Right ventricle myocardium inferior (tissue), 1 donor: ENCODE measurements at regions of chr11 and their contacts with region 1.

Region 1: DNA sequence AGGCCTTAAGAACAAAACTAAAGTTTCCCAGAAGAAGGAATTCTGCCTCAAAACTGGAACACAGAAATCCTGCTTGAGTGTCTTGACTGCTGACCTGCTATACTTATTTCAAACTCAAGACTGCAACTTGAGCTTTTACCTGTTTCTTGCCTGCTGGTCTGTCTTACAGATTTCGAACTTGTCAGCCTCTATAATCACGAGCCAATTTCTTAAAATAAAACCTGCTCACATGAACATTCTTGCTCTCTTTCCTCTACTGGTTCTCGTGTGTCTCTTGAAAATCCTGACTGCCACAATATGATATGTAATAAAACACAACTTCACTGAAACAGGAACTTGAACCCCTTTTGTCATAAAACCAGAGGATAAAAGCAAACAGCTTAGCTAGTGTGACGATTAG is 13.9 kb downstream of the PATL1 start:
- DNase-seq: no peak
- ATAC-seq: no peak

Region 2: DNA sequence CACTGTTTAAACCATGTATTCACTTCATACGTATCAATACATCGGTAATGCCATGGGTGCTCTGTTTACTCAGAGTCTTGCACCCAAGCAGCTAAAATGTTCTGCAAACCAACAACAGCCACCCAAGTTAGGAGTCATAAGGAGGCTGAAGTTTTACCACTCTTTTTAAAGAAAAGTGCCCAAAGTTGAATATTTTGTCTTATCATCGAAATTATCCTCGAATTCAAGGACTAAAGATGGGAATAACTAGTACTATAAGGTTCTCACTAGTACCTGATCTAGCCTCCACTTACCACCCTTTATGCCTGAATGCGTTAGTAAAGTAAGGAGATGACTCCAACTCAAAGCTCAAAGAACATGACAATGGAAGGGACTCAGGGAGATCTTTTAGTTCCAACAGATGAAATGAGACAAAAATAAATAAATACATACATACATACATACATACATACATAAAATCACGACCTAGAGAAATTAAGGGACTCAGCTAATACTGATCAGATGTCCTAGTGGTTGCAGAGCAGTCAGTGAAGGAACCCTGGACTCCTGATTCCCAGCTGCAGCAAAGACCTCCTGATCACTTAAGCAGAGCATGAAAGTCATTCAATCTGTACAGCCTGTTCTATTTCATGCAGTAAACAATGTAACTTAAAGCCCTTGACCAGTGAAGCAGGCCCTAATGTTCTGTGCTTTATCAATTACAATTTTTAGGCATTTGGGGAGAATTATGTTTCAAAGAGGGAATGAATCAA is 47.0 kb before region 1 on chr11:
- intact Hi-C with region 1: loop called (anchors 5 kb)
- DNase-seq: no peak
- ATAC-seq: no peak